MCF 10A (cell line): ENCODE measurements at regions of chr12 and their contacts with region 1.

Region 1: GRCh38 chr12:55973598-55974307 is at the start of gene RAB5B:
- DNase-seq: peak; percentile 100
- H3K4me3 Mint-ChIP-seq: no peak within 1 kb of the TSS
- H3K27ac Mint-ChIP-seq: no peak within 1 kb of the TSS
- H3K4me1 Mint-ChIP-seq: peaks cover 25% of the 10 kb centered on the region
- H3K27me3 Mint-ChIP-seq: no peaks in the 10 kb centered on the region
- CTCF ChIP-seq: no peak
- total RNA-seq, gene RAB5B: 67.4 and 96.1 TPM in 2 replicates

Region 2: GRCh38 chr12:55829967-55830600 is 143.7 kb before region 1 on chr12:
- CTCF ChIA-PET with region 1: no interaction called
- POLR2A ChIA-PET with region 1: interaction called, 23 read pairs
- intact Hi-C with region 1: no loop called
- DNase-seq: peak; percentile 13
- H3K4me3 Mint-ChIP-seq: peak overlapping the region; percentile 97
- H3K27ac Mint-ChIP-seq: peak overlapping the region; percentile 92
- H3K4me1 Mint-ChIP-seq: peaks cover 28% of the 10 kb centered on the region
- H3K27me3 Mint-ChIP-seq: no peaks in the 10 kb centered on the region
- CTCF ChIP-seq: no peak

Region 3: DNA sequence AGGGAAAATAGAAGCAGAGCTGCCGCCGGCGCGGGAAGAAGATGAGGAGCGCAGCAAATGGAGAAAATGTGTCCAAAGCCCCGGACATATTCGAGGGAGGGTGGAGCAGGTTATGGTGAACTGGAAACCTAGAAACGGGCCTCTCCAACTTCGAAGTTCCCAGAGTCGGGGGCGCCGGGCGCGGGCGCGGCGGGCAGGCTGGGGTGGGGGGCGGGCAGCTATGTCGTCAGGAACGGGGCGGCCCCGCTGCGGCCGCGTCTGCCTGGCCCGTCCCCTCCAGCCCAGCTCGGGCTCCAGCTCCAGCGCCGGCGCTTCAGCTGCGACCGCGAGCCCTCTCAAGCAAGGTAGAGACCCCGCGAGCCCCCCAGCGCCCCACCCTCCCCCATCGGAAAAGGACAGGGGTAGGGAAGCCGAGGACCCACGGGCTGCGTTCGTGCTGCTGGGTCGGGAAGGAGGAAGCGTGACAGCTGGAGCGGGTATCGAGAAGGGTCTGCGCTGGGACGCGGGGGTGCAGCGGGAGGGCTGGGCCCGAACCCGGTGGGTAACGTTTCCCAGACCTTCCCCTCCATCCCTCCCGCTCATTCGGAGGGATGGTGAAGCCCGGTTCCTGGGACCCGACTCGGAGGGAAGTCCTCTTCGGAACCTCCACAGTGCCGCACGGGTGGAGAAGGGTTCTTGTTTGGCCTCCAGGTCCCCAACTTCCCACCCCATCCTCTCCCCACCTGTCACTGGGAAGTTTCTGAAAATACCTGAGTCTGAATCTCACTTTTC is 41.8 kb before region 1 on chr12:
- CTCF ChIA-PET with region 1: interaction called, 4 read pairs
- POLR2A ChIA-PET with region 1: interaction called, 140 read pairs
- intact Hi-C with region 1: loop called (anchors 2 kb)
- DNase-seq: no peak
- H3K4me3 Mint-ChIP-seq: peak overlapping the region; percentile 79
- H3K27ac Mint-ChIP-seq: peak overlapping the region; percentile 89
- H3K4me1 Mint-ChIP-seq: peaks cover 47% of the 10 kb centered on the region
- H3K27me3 Mint-ChIP-seq: no peaks in the 10 kb centered on the region
- CTCF ChIP-seq: no peak

Region 4: GRCh38 chr12:55955800-55956508 is 17.8 kb before region 1 on chr12:
- CTCF ChIA-PET with region 1: interaction called, 7 read pairs
- POLR2A ChIA-PET with region 1: interaction called, 74 read pairs
- intact Hi-C with region 1: loop called (anchors 1 kb)
- DNase-seq: peak; percentile 88
- H3K4me3 Mint-ChIP-seq: no peak overlapping the region
- H3K27ac Mint-ChIP-seq: peak overlapping the region; percentile 32
- H3K4me1 Mint-ChIP-seq: peaks cover 28% of the 10 kb centered on the region
- H3K27me3 Mint-ChIP-seq: no peaks in the 10 kb centered on the region
- CTCF ChIP-seq: peak; percentile 43

Region 5: DNA sequence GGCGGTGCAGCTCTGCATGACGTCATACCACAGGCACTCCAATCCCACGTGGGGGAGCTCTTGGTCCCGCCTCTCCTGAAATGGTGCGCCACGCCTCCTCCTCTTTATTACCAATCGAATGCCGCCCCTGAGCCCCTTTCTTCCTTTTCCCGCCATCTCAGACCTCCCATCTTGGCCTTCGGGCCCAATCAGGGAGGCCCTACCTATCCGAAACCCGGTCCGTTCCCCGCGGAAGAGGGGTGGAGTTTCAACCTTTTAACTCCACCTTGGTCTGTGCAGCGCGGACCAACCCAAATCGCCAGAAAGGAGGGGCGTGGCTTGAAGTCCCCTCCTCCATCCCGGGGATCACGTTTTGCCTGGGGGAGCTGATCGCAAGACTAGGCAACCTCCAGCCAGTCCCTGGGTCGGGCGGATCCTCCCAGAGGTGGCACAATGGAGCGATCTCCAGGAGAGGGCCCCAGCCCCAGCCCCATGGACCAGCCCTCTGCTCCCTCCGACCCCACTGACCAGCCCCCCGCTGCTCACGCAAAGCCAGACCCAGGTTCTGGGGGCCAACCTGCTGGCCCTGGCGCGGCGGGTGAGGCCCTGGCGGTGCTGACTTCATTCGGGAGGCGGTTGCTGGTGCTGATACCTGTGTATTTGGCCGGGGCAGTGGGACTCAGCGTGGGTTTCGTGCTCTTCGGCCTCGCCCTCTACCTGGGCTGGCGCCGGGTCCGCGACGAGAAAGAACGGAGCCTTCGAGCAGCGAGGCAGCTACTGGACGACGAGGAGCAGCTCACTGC is 154.3 kb after region 1 on chr12 and contains the start of gene ESYT1:
- CTCF ChIA-PET with region 1: no interaction called
- POLR2A ChIA-PET with region 1: interaction called, 18 read pairs
- intact Hi-C with region 1: no loop called
- DNase-seq: peak; percentile 100
- H3K4me3 Mint-ChIP-seq: peak within 1 kb of the TSS; percentile 84
- H3K27ac Mint-ChIP-seq: peak within 1 kb of the TSS; percentile 84
- H3K4me1 Mint-ChIP-seq: peaks cover 26% of the 10 kb centered on the region
- H3K27me3 Mint-ChIP-seq: no peaks in the 10 kb centered on the region
- CTCF ChIP-seq: no peak
- total RNA-seq, gene ESYT1: 111 and 123 TPM in 2 replicates

Region 6: GRCh38 chr12:56437430-56438176 is 463.9 kb after region 1 on chr12:
- CTCF ChIA-PET with region 1: no interaction called
- POLR2A ChIA-PET with region 1: no interaction called
- intact Hi-C with region 1: no loop called
- DNase-seq: no peak
- H3K4me3 Mint-ChIP-seq: no peak overlapping the region
- H3K27ac Mint-ChIP-seq: no peak overlapping the region
- H3K4me1 Mint-ChIP-seq: no peaks in the 10 kb centered on the region
- H3K27me3 Mint-ChIP-seq: no peaks in the 10 kb centered on the region
- CTCF ChIP-seq: no peak